ENCODE measurements at regions of chr2 and their contacts with region 1.

Region 1: GRCh38 chr2:121076885-121077549 is 208.0 kb downstream of the TFCP2L1 start:
- DNase-seq: peak; percentile 45 to 80 (median 62)
- ATAC-seq: peak in 3 of 4 donors; percentile 36 to 68 (median 62)
- H3K4me3 ChIP-seq: no peak overlapping the region
- H3K27ac ChIP-seq: no peak overlapping the region
- H3K4me1 ChIP-seq: peaks cover 0 to 8% (median 0%) of the 10 kb centered on the region in 12 donors
- H3K27me3 ChIP-seq: peaks cover 0 to 21% (median 18%) of the 10 kb centered on the region in 9 donors
- CTCF ChIP-seq: peak; percentile 67 to 89 (median 80)
- POLR2A ChIP-seq: no peak

Region 2: DNA sequence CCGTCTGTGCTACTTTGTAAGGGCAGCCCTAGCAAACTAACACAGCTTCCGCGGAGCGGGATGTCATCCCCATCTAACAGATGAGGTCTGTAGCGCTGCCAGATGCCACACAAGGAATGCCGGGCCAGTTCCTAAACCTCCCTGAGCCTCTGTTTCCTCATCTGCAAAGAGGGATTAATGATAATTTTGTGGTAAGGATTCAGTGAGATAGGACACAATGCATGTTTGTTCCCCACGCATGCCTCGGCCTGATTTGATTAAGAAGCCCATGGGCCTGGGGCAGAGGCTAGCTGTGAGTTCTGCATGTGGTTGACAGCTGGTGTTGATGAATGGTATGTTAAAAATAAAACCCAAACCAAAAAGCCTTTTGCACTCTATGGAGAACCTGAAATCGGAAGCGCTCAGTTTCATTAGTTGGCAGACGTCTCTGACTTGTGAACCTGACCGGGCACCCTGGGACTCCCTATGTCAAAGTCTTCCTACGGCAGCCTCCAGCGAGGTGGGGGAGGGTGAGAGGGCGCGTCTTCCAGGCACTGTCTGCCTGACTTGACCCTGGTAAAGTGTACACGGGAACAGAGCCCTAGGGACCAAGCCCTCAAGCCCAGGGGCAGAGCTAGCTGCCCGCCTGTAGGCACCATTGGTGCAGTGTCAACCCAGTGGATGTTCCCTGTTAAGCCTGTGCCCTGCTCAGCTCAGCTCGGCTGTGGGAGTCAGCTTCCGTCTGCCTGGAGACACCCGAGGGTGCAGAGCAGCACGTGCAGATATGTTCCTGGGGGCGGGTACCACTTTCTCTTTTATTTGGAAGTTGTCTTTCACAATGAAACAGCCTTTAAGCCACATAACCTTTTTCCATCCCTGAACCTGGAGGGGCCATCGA is 745.8 kb before region 1 on chr2:
- intact Hi-C with region 1: loop called in 2 of 10 experiments (anchors 10 kb)
- DNase-seq: no peak
- ATAC-seq: peak in 1 of 4 donors; percentile 18
- H3K4me3 ChIP-seq: no peak overlapping the region
- H3K27ac ChIP-seq: no peak overlapping the region
- H3K4me1 ChIP-seq: no peaks in the 10 kb centered on the region
- H3K27me3 ChIP-seq: peaks cover 0 to 7% (median 0%) of the 10 kb centered on the region in 9 donors
- CTCF ChIP-seq: no peak
- POLR2A ChIP-seq: no peak

Region 3: GRCh38 chr2:120693121-120693520 is 383.9 kb before region 1 on chr2:
- intact Hi-C with region 1: loop called in 9 of 10 experiments (anchors 1 to 2 kb)
- DNase-seq: no peak
- ATAC-seq: no peak
- H3K4me3 ChIP-seq: no peak overlapping the region
- H3K27ac ChIP-seq: no peak overlapping the region
- H3K4me1 ChIP-seq: peaks cover 0 to 5% (median 0%) of the 10 kb centered on the region in 12 donors
- H3K27me3 ChIP-seq: peaks cover 0 to 57% (median 16%) of the 10 kb centered on the region in 9 donors
- CTCF ChIP-seq: no peak
- POLR2A ChIP-seq: no peak

Region 4: GRCh38 chr2:120735746-120736170 is 341.3 kb before region 1 on chr2 and contains the start of gene GLI2:
- intact Hi-C with region 1: loop called in 2 of 10 experiments (anchors 5 to 10 kb)
- DNase-seq: peak; percentile 63 to 85 (median 74)
- ATAC-seq: peak; percentile 43 to 87 (median 78)
- H3K4me3 ChIP-seq: peak within 1 kb of the TSS; percentile 24 to 71 (median 52)
- H3K27ac ChIP-seq: peak within 1 kb of the TSS in 10 of 12 donors; percentile 65 to 87 (median 72)
- H3K4me1 ChIP-seq: peaks cover 0 to 31% (median 5%) of the 10 kb centered on the region in 12 donors
- H3K27me3 ChIP-seq: peaks cover 11 to 76% (median 37%) of the 10 kb centered on the region in 9 donors
- CTCF ChIP-seq: peak; percentile 39 to 92 (median 70)
- POLR2A ChIP-seq: no peak
- total RNA-seq, gene GLI2: 0.67 to 4.1 (median 1.0) TPM

Region 5: GRCh38 chr2:120892967-120893667 is 183.9 kb before region 1 on chr2:
- intact Hi-C with region 1: loop called in 1 of 10 experiments (anchors 10 kb)
- DNase-seq: peak in 1 of 5 donors; percentile 17
- ATAC-seq: peak in 3 of 4 donors; percentile 43 to 57 (median 51)
- H3K4me3 ChIP-seq: no peak overlapping the region
- H3K27ac ChIP-seq: peak overlapping the region in 6 of 12 donors; percentile 24 to 59 (median 40)
- H3K4me1 ChIP-seq: peaks cover 0 to 14% (median 6%) of the 10 kb centered on the region in 12 donors
- H3K27me3 ChIP-seq: no peaks in the 10 kb centered on the region
- CTCF ChIP-seq: no peak
- POLR2A ChIP-seq: no peak

Measured in heart left ventricle (tissue), 16 donors.